Body of pancreas (tissue), 4 donors: ENCODE measurements at regions of chr1 and their contacts with region 1.

Region 1: DNA sequence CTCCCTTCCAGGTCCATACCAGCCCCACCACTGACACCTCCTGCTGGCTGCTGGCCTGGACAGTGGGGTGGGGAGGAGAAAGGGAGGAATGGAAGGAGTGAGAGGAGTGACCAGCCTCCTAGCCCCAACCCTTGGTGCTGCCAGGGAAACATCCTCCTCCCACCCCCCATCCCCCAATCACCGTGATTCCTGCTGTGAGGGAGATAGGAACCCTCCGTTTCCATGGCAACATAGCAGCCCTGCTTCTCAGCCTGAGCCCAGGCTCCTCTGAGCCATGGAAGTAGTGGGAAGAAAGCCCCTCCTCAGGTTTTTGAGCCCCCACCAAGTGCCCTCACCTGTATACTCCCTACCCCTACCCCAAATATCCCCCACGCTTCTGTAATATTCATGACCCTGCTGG is 44.4 kb upstream of the SCMH1 start:
- DNase-seq: no peak
- ATAC-seq: no peak
- H3K4me3 ChIP-seq: no peak overlapping the region
- H3K27ac ChIP-seq: no peak overlapping the region
- H3K4me1 ChIP-seq: no peaks in the 10 kb centered on the region
- H3K27me3 ChIP-seq: no peaks in the 10 kb centered on the region
- CTCF ChIP-seq: no peak
- POLR2A ChIP-seq: no peak

Region 2: DNA sequence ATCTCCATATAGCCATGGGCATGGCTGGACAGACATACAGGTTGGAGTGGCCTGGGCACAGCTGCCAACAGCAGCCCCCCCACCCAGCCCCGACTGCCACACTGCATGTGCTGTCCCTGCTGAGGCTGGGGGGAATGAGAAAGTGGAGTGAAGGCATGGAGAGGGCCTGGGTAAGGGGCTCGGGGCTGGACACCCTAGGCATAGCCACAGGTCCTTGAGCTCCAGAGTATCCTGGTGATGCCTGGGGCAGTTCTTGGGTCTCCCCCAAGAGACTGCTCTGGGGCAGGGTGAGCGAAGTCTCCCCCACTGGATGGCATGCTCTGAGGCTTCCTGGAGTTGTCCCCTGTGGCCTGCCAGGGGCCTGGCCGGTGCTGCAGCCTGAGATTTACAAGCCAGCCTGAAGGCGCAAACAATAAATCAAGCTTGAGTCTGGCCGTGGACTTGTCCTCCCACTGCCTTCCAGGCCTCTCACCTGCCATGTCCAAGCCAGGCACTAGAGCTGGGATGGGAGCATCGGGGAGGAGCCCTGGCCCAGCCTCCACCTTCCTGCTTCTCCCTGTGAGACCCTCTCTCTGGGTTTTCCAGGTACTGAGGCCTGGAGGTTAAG is 128.3 kb after region 1 on chr1:
- intact Hi-C with region 1: loop called (anchors 5 kb)
- DNase-seq: no peak
- ATAC-seq: no peak
- H3K4me3 ChIP-seq: no peak overlapping the region
- H3K27ac ChIP-seq: no peak overlapping the region
- H3K4me1 ChIP-seq: peaks cover 10% of the 10 kb centered on the region
- H3K27me3 ChIP-seq: no peaks in the 10 kb centered on the region
- CTCF ChIP-seq: no peak
- POLR2A ChIP-seq: no peak